Endothelial cell of umbilical vein (primary cell): ENCODE measurements at regions of chr6 and their contacts with region 1.

Region 1: DNA sequence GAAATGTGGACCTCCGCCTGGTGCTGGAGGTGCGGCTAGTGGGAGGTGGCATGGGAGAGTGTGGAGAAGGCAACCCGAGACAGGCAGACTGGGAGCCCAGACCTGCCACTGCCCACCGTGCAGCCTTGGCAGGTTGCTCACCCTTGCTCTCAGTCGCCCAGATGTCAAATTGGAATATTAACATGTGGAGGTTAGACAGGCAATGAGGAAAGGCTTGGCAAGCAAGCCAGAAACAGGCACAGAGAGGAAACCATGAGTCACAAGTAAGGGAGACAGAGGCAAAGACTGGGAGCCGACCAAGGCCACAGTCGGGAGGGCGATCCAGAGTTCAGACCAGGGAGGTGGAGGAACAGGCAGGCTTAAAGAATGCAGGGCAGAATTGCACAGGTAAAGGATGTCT is 178.2 kb downstream of the FOXC1 start:
- DNase-seq: peak; percentile 92
- H3K4me3 ChIP-seq: no peak overlapping the region
- H3K27ac ChIP-seq: peak overlapping the region; percentile 84
- H3K4me1 ChIP-seq: peaks cover 45% of the 10 kb centered on the region
- H3K27me3 ChIP-seq: no peaks in the 10 kb centered on the region
- CTCF ChIP-seq: no peak
- POLR2A ChIP-seq: no peak

Region 2: DNA sequence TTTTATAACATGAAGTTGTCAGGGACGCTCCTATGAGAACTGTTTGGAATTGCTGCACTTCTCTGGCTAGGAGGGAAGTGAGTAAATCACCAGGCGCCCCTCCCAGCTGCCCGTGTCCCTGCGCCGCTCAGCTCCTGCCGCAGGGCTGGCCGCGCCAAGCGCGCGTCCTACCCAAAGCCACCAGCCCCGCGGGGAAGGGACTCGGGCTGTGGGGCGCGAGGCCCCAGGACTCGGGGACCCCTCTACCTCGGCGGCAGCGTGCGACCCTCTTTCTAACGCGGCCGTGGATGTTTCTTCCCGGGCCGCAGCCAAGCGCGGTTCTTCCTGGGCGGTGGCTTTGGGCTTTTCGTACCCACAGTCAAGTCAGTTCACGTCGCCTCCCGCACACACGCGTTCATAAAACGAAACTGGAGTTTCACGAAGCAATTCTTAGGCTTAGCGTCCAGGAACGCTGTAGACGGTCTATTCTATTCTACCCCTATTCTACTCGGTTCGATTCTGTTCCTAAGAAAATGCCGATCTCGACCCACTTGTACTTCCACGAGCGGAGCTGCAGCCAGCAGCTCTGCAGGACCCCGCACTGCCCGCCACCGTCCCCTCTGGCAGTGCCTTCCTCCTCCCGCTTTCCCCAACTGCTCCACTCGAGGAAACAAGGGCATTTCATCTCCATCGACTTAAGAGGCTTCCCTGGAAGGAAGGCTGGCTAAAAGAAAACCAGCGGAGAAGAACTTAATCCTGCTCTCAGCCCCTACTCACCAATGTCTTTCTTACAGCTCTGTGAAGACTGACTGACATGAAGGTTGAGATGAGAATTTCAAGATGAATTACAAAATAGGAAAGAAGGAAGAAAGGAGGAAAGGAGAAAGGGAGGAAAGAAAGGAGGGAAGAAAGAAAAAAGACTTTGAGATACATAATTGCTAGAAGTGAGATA is 162.8 kb before region 1 on chr6:
- CTCF ChIA-PET with region 1: no interaction called
- POLR2A ChIA-PET with region 1: no interaction called
- dilution Hi-C with region 1: no loop called
- intact Hi-C with region 1: loop called (anchors 2 kb)
- DNase-seq: peak; percentile 73
- H3K4me3 ChIP-seq: peak overlapping the region; percentile 59 to 86 (median 69)
- H3K27ac ChIP-seq: peak overlapping the region; percentile 3
- H3K4me1 ChIP-seq: peaks cover 21% of the 10 kb centered on the region
- H3K27me3 ChIP-seq: peaks cover 5 to 15% of the 10 kb centered on the region in 2 experiments
- CTCF ChIP-seq: no peak
- POLR2A ChIP-seq: no peak

Region 3: GRCh38 chr6:1767481-1768251 is 20.2 kb before region 1 on chr6:
- CTCF ChIA-PET with region 1: interaction called, 4 read pairs
- POLR2A ChIA-PET with region 1: no interaction called
- dilution Hi-C with region 1: no loop called
- intact Hi-C with region 1: loop called (anchors 1 kb)
- DNase-seq: peak; percentile 38
- H3K4me3 ChIP-seq: no peak overlapping the region
- H3K27ac ChIP-seq: no peak overlapping the region
- H3K4me1 ChIP-seq: peaks cover 53% of the 10 kb centered on the region
- H3K27me3 ChIP-seq: no peaks in the 10 kb centered on the region
- CTCF ChIP-seq: no peak
- POLR2A ChIP-seq: no peak

Region 4: DNA sequence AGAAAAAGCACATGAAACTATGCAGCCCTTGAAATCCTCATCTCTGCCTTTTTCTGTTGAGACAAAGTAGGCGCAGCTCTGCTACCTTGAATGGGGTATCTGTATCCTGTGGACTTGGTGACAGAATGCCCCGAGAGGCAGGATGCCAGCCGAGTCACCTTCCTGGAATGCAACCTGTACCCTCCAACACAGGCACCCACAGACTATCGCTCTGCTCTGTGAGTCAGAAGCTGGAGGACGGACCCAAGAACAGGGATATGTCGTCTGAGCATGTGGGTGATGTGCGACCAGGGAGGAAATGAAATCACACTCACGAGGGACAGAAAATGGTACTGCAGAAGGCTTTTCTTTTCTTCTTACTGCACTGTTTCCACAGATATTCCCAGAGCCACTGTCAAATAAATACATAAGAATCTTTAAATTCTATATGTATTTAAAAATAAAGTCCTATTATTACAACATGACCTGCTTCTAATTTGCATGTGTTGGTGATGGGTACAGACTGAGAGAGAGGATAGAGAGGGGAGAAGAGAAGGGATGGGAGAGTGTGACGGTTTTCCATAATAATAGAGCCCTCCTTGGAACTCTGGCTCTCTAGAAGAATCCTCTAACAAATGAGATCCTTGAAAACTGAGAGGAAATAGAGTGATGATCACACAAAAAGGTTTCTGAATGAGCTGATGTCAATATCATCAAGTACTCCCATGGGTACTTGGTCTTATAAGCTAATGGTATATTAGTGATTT is 129.9 kb after region 1 on chr6:
- CTCF ChIA-PET with region 1: no interaction called
- POLR2A ChIA-PET with region 1: no interaction called
- dilution Hi-C with region 1: no loop called
- intact Hi-C with region 1: loop called (anchors 2 kb)
- DNase-seq: peak; percentile 86
- H3K4me3 ChIP-seq: no peak overlapping the region
- H3K27ac ChIP-seq: peak overlapping the region; percentile 75
- H3K4me1 ChIP-seq: peaks cover 18% of the 10 kb centered on the region
- H3K27me3 ChIP-seq: no peaks in the 10 kb centered on the region
- CTCF ChIP-seq: no peak
- POLR2A ChIP-seq: no peak

Region 5: GRCh38 chr6:2028457-2029038 is 240.7 kb after region 1 on chr6:
- CTCF ChIA-PET with region 1: no interaction called
- POLR2A ChIA-PET with region 1: no interaction called
- dilution Hi-C with region 1: no loop called
- intact Hi-C with region 1: loop called (anchors 5 kb)
- DNase-seq: peak; percentile 79
- H3K4me3 ChIP-seq: peak overlapping the region in 1 of 3 experiments; percentile 3
- H3K27ac ChIP-seq: peak overlapping the region; percentile 39
- H3K4me1 ChIP-seq: peaks cover 25% of the 10 kb centered on the region
- H3K27me3 ChIP-seq: no peaks in the 10 kb centered on the region
- CTCF ChIP-seq: no peak
- POLR2A ChIP-seq: no peak